Activated T-helper 2 cell treated with anti-CD3 and anti-CD28 coated beads, Interferon-gamma antibody, Interleukin-2, Interleukin-4, amounts not matched to agents 10 μg/mL and 5 μg/mL and 100 μg/mL, durations not matched to agents 14 hours and 24 hours and 36 hours (primary cell): ENCODE measurements at regions of chr5 and their contacts with region 1.

Region 1: DNA sequence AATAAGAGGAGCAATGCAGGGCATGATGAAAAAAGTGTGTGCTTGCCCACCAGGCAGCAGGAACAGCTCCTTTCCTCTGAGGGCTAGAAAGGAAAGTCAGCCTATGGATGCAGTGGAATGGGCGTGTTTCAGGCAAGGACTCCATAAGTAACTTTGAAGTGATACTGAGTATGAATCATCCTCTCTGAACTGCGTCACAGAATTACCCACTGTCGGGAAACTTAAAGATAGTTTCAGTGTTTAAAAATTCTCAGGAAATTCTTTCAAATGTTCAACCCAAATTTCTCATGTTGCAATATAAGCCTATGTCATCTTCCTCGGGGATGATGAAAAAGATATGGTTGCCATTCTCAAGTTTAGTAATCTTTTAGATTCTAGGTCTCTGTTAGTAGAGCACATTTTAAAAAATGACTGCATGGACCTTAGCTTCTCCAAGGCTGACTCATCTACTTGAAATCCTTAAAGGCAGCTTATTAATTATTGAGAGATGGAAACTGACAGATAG is 27.7 kb downstream of the PTCD2 start:
- DNase-seq: no peak
- H3K4me3 Mint-ChIP-seq: no peak overlapping the region
- H3K27ac Mint-ChIP-seq: peak overlapping the region; percentile 88
- H3K4me1 Mint-ChIP-seq: peaks cover 47% of the 10 kb centered on the region
- H3K27me3 Mint-ChIP-seq: no peaks in the 10 kb centered on the region

Region 2: DNA sequence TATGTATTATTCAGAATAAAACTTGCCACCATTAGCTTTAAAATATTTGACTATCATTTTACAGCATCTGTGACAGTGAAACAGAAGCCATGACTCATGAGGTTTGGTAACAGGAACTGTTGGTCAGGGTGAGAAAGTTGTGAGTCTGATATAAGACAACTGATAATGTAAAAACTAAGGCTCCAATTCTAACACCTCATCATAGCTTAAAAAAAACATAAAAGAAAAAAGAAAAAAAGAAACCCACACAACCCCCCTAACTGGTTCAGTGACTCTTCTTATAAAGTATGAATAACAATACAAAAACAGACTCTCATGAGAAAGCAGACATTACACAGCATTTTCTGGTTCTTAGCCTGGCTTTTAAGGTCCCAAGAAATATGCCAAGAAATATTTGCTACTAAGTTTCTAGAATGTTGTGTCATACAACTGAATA is 113.6 kb before region 1 on chr5:
- intact Hi-C with region 1: loop called (anchors 1 kb)
- DNase-seq: no peak
- H3K4me3 Mint-ChIP-seq: no peak overlapping the region
- H3K27ac Mint-ChIP-seq: no peak overlapping the region
- H3K4me1 Mint-ChIP-seq: peaks cover 42% of the 10 kb centered on the region
- H3K27me3 Mint-ChIP-seq: peaks cover 25% of the 10 kb centered on the region

Region 3: GRCh38 chr5:72319976-72320752 is 27.7 kb before region 1 on chr5 and contains the starts of genes MRPS27 and PTCD2:
- intact Hi-C with region 1: loop called (anchors 2 kb)
- DNase-seq: peak; percentile 93
- H3K4me3 Mint-ChIP-seq: peak within 1 kb of the TSS; percentile 93
- H3K27ac Mint-ChIP-seq: peak within 1 kb of the TSS; percentile 85
- H3K4me1 Mint-ChIP-seq: peaks cover 31% of the 10 kb centered on the region
- H3K27me3 Mint-ChIP-seq: no peaks in the 10 kb centered on the region
- total RNA-seq, gene MRPS27: 96.8 and 98.4 TPM in 2 replicates
- total RNA-seq, gene PTCD2: 14.7 and 16.8 TPM in 2 replicates

Region 4: DNA sequence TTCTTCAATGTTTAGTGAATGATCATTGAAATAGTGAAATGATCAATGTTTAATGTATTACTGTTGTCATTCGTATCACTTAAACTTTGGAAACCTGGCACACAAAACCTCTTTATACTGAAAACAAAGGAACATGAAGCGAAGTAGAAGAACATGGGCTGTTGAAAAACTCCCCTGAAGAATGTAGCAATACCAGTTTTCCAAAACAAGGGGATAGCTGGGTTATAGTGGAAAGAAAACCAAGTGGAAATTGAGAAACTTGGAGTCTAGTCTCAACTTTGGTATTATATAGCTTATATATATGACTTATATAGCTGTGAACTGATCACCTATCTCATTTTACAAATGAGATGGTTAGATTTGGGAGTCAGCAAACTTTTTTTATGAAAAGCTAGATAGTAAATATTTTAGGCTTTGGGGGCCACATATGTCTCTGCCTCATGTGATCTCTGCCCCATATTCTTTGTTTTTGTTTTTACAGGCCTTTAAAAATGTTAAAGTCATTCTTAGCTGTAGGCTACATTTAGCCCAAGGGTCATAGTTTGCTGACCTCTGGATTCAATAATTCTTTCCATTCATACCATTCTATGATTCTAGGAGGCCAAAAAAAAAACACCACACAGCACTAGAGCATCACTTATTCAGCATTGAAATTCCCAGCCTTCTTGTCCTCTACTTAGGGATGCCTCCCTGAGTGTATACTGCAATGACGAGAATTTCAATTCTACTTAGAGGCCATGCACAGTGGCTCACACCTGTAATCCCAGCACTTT is 10.9 kb before region 1 on chr5:
- intact Hi-C with region 1: no loop called
- DNase-seq: no peak
- H3K4me3 Mint-ChIP-seq: no peak overlapping the region
- H3K27ac Mint-ChIP-seq: no peak overlapping the region
- H3K4me1 Mint-ChIP-seq: peaks cover 3% of the 10 kb centered on the region
- H3K27me3 Mint-ChIP-seq: no peaks in the 10 kb centered on the region

Region 5: DNA sequence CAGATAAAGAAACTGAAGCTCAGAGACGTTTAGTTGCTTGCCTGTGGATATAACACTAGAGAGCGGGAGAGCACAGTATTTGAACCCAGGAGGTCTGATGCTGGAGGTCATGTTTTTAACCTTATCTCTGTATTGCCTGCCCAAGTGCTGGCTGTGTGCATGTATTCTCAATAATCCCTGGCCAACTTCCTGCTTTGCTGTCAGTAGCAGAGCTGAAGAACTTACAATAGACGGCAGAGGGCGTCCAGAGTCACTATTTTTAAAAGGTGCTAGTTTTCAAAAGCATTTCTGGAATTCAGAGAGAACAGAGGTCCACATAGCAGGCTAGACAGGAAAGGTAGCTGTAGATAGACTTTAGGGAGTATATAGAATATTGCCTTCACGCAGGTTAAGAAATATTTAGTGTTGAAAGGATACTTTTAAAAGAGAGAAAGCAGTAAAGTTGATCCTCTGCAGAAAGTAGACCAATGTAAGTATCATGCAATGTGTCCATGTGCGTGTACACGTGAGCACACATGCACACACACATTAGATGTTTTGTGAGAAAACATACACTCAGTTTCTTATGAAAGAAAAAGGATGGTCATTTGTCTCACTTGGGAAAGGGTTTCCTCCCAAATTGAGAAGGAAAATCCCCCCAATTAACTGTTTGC is 18.6 kb after region 1 on chr5:
- intact Hi-C with region 1: loop called (anchors 2 kb)
- DNase-seq: peak; percentile 14
- H3K4me3 Mint-ChIP-seq: no peak overlapping the region
- H3K27ac Mint-ChIP-seq: no peak overlapping the region
- H3K4me1 Mint-ChIP-seq: peaks cover 11% of the 10 kb centered on the region
- H3K27me3 Mint-ChIP-seq: no peaks in the 10 kb centered on the region